IMR-90 (cell line): ENCODE measurements at regions of chr11 and their contacts with region 1.

Region 1: DNA sequence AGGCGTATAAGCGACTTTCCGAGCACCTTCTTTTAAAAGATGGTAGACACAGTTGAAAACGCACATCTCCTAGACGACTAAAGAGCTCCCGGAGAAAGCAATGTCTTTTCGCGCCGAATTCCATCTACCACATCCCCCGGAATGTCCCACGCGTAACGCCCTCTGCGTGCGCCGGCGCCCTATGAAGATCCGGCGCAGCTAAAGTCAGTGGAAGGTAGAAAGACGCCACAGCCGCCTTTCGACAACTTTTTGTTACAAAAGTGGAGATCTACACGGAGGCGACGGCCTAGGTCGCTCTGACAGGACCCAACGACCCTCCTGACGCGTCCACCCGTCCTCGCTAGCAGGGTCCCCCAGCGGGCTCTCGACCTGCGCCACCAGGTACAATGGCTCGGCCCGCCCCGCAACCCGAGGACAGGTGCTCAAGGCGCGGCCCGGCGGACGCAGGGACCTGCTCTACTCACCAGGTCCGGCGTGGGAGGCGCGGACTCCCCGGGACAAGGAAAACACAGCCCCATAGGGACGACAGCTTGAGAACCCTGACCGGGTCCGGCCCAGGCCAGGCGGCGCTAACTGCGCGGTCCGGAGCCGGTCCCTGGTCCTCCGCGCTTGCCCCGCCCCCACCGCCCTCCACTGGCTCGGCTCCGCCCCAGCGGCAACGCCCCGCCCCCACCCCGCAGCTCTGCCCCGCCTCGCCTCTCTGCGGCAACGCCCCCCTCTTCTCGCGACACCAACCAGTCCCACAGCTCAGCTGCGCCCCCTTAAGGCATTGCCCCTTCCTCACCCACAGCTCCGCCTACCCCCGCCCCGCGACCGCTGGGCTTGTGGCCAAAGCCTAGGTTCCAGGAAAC is at the start of gene SVIP:
- DNase-seq: peak; percentile 87
- ATAC-seq: peak; percentile 97
- H3K4me3 ChIP-seq: peak within 1 kb of the TSS; percentile 70
- H3K27ac ChIP-seq: peak within 1 kb of the TSS; percentile 0; the same call in 1 of the 2 replicates
- H3K4me1 ChIP-seq: no peaks in the 10 kb centered on the region
- H3K27me3 ChIP-seq: no peaks in the 10 kb centered on the region
- CTCF ChIP-seq: peak; percentile 71
- POLR2A ChIP-seq: no peak
- RAD21 ChIP-seq: peak; percentile 24; the same call in 1 of the 2 replicates
- total RNA-seq, gene SVIP: 2.0 and 6.1 TPM in 2 replicates

Region 2: GRCh38 chr11:22625448-22626287 is 203.8 kb before region 1 on chr11 and contains the start of gene FANCF:
- CTCF ChIA-PET with region 1: no interaction called
- POLR2A ChIA-PET with region 1: no interaction called
- dilution Hi-C with region 1: no loop called
- in situ Hi-C with region 1: no loop called
- intact Hi-C with region 1: loop called (anchors 5 kb)
- DNase-seq: peak; percentile 99
- ATAC-seq: peak; percentile 97
- H3K4me3 ChIP-seq: peak within 1 kb of the TSS; percentile 83
- H3K27ac ChIP-seq: peak within 1 kb of the TSS; percentile 89
- H3K4me1 ChIP-seq: no peaks in the 10 kb centered on the region
- H3K27me3 ChIP-seq: no peaks in the 10 kb centered on the region
- CTCF ChIP-seq: no peak
- POLR2A ChIP-seq: peak; percentile 43; the same call in 1 of the 2 replicates
- RAD21 ChIP-seq: no peak
- total RNA-seq, gene FANCF: 5.6 and 7.5 TPM in 2 replicates